ENCODE measurements at regions of chr20 and their contacts with region 1.

Region 1: GRCh38 chr20:32050851-32051556 is 1.0 kb upstream of the HCK start:
- DNase-seq: no peak

Region 2: DNA sequence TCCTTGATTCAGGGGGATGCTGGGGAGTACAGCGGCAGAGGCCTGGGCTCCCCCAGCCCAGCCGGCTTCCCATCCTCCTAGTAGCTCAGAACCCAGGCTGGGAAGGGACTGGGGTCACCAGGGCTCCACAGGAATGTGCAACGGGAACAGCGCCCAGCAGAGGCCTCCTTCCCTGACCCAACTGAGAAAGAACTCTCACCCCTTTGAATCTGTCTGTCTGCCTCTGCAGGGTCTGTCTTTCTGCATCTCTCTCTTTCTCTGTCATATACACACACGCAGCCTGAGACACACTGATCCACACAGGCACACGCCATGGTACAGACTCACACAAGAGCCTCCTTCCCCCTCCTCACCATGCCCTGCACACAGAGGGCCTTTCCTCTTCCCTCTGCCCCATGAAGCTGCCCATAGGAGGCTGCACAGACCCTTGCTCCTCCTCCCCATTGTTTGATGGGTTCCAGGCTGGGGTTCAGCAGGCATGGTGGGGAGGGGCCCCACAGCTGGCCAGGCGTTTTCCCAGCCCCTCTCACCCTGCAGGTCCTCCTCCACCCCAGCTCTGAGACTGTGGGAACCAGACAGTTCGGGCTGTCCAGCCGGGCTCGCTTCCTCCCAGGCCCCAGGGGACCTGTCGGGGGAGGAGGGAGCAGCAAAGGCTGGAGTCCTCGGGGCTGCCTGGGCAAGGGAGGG is 208.4 kb before region 1 on chr20:
- CTCF ChIA-PET with region 1: interaction called, 10 read pairs
- POLR2A ChIA-PET with region 1: no interaction called
- DNase-seq: no peak

Measured in HEK293T (cell line).